ENCODE measurements at regions of chrX and their contacts with region 1.

Region 1: GRCh38 chrX:32530802-32531403 is 680.4 kb downstream of the DMD start:
- DNase-seq: no peak
- H3K4me3 ChIP-seq: peak overlapping the region; percentile 12 to 37
- H3K27ac ChIP-seq: no peak overlapping the region
- H3K4me1 ChIP-seq: no peaks in the 10 kb centered on the region
- H3K27me3 ChIP-seq: no peaks in the 10 kb centered on the region
- CTCF ChIP-seq: peak; percentile 24 to 58 (median 44)

Region 2: DNA sequence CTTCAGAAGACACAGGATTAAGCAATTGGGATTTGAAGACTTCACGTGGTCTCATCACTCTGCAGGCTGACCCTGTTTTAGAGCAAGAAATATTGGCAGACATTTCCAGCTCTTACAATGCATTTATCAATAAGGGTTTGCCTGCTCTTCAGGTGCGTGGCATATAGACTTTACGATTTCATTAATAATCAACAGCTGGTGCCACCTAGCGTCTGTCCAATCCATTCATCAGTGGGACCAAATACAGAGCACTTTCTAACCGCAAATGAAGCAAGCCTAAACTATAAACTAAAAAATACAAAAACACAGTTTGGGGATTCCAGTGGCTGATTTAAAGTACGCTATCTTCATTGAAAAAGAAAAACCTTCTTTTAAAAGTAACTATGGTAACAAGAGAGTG is 805.9 kb after region 1 on chrX:
- intact Hi-C with region 1: loop called (anchors 2 kb)
- DNase-seq: no peak
- H3K4me3 ChIP-seq: peak overlapping the region; percentile 4 to 58
- H3K27ac ChIP-seq: no peak overlapping the region
- H3K4me1 ChIP-seq: no peaks in the 10 kb centered on the region
- H3K27me3 ChIP-seq: no peaks in the 10 kb centered on the region
- CTCF ChIP-seq: peak; percentile 17 to 53 (median 36)